AG04449 (cell line): ENCODE measurements at regions of chr17 and their contacts with region 1.

Region 1: GRCh38 chr17:50087246-50087911 is 7.8 kb upstream of the PDK2 start:
- DNase-seq: no peak
- H3K4me3 ChIP-seq: no peak overlapping the region
- CTCF ChIP-seq: peak; percentile 97

Region 2: GRCh38 chr17:50015146-50015545 is 72.2 kb before region 1 on chr17:
- CTCF ChIA-PET with region 1: interaction called, 28 read pairs
- POLR2A ChIA-PET with region 1: no interaction called
- DNase-seq: no peak
- H3K4me3 ChIP-seq: no peak overlapping the region
- CTCF ChIP-seq: no peak

Region 3: DNA sequence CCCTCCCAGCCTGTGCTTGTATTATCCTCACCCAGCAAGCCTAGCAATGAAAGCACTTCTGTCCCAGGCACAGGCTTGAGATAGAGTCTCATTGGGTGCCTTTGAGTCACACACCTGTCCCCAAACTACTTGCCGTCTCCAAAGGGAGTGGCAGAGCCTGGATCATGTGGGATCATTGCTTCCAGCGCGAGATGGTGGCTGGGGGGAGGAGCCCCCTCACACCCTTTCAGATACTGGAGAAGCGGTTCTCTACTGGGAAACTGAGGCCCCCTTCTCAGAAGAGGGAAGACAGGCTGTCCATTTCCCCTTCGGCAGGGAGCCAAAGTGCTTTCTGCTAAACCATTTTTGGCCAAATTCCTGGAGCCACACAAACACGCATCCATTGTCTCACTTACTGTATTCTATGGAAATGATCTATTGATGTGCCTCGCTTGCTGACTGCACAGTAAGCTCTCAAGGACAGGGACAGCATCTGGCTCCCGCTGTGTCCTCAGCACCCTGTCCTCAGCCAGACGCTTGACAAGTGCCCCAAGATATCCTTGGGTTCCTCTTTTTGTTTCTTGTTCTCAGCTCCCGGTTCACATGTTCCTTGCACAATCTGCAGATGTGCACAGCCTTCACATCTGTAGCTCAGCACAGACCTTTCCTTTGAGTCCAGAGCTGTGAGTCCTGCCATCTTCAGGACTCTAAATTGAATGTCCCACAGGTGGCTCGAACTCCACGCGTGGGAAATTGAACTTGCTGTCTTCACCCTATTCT is 66.4 kb before region 1 on chr17:
- CTCF ChIA-PET with region 1: interaction called, 188 read pairs
- POLR2A ChIA-PET with region 1: no interaction called
- DNase-seq: no peak
- H3K4me3 ChIP-seq: no peak overlapping the region
- CTCF ChIP-seq: no peak

Region 4: GRCh38 chr17:50026901-50027630 is 60.3 kb before region 1 on chr17:
- CTCF ChIA-PET with region 1: interaction called, 188 read pairs
- POLR2A ChIA-PET with region 1: interaction called, 5 read pairs
- DNase-seq: no peak
- H3K4me3 ChIP-seq: peak overlapping the region; percentile 51
- CTCF ChIP-seq: peak; percentile 95

Region 5: GRCh38 chr17:50047488-50048126 is 39.8 kb before region 1 on chr17:
- CTCF ChIA-PET with region 1: interaction called, 18 read pairs
- POLR2A ChIA-PET with region 1: interaction called, 3 read pairs
- DNase-seq: no peak
- H3K4me3 ChIP-seq: no peak overlapping the region
- CTCF ChIP-seq: no peak

Region 6: DNA sequence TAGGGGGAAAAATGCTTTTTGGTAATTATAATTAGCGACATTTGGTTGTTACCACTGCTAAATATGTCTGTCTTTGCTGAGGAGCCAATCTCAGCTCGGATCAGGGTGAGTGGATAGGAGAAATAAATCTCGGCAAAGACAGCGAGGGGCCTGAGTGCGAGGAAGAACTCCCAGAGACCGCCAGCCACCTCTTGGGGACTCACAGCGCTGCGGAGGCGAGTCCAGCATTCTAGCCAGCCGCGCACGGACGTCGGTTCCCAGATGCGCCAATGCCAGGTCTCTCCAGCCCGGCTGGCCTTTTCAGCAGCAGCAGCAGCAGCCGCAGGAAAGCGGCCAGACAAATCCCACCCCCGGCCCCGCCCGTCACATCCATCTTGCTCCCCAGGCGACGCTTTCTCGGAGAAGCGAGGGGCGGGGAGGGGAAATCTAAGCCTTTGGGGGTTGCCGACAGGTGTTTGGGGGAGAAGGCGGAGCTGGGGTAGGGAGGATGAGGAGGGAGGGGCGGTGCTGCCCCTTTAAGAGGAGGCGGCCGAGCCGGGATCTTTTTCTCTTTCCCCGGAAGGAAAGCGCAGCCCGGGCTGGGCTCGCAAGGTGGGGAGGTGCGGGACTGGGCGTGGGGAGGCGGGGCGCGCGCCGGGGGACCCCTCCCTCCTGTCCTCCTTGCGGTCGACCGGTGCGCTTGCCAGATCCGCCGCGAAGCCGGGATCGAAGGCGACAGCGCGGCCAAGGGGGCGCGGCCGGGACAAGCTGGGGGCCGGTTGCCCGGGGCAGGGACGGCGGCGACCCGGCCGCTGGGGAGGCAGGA is 31.8 kb before region 1 on chr17 and contains the start of gene ITGA3:
- CTCF ChIA-PET with region 1: interaction called, 20 read pairs
- POLR2A ChIA-PET with region 1: no interaction called
- DNase-seq: no peak
- H3K4me3 ChIP-seq: peak within 1 kb of the TSS; percentile 78
- CTCF ChIP-seq: no peak

Region 7: DNA sequence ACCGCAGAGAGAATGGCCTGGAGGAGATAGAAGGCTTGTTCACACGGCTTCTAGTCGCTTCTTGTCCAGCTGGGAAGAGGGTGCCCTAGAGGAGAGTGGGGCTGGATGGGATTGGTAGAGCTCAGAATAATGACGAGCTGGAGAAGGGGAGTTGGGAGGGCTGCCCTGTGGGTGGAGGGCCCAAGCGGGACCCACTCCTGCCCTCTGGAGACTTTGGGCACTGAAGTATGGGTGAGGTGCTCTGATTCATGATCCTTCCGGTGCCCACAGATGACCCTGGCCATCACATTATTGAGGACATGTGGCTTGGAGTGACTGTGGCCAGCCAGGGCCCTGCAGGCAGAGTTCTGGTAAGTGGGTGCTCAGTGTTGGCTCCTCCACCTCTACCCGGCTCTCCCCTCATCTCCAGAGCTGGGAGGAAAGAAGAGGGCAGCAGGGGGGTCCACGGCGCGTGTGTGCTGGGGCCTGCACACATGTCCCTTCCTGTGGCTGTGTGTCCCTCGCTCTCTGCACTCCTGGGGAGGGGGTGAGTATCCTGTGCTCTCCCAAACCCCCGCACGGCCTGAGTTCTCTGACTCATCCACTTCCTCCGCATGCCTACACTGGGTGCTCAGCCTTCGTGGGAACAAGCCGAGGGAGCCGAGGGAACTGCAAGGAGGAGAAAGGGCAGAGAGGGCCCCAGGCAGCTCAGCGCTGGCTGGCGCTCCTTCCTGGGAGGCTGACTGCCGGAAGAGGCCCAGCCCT is 22.9 kb before region 1 on chr17:
- CTCF ChIA-PET with region 1: interaction called, 36 read pairs
- POLR2A ChIA-PET with region 1: interaction called, 4 read pairs
- DNase-seq: peak; percentile 94
- H3K4me3 ChIP-seq: no peak overlapping the region
- CTCF ChIP-seq: no peak